ENCODE measurements at regions of chr15 and their contacts with region 1.

Region 1: GRCh38 chr15:65638681-65639089 is 16.9 kb downstream of the SLC24A1 start:
- DNase-seq: peak; percentile 56 to 73 (median 70)
- H3K4me3 ChIP-seq: no peak overlapping the region
- H3K4me3 Mint-ChIP-seq: peak overlapping the region in 4 of 8 donors; percentile 2 to 32 (median 6)
- H3K27ac ChIP-seq: no peak overlapping the region
- H3K27ac Mint-ChIP-seq: peak overlapping the region in 3 of 7 donors; percentile 0 to 38 (median 1)
- H3K4me1 ChIP-seq: peaks cover 8% of the 10 kb centered on the region
- H3K4me1 Mint-ChIP-seq: peaks cover 8 to 16% (median 9%) of the 10 kb centered on the region in 4 donors
- H3K27me3 ChIP-seq: no peaks in the 10 kb centered on the region
- H3K27me3 Mint-ChIP-seq: no peaks in the 10 kb centered on the region

Region 2: DNA sequence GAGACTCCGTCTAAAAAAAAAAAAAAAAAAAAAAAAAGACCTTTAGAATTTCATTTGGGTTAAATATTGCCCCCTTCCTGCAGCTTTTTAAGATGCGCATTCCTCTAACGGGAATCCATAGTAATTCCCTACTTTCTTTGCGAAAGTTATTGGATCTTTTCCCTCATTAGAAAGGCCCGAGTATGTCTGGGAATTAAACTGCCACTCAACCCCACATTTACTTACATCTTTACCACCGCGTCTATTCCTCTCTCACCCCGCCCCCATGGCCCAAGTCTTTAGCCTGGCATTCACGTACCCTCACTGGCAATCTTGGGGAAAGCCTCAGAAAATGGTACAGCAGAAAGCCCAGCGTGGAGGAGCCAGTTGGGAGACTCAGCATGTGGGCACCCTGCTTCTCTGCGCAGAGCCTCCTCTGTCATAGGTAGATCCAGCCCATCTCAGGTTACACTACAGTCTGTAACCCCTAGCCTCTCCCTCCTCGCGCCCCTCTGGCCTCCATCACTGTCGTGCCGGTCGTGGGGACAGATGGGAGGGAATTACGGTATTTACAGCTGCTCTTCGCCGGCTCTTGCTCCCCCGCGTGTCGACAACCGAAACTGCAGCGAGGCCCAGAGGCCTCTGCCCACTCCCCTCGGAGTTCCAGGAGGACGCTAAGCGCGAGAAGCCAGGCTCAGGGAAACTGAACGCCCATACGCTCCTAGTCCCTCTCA is 733.4 kb before region 1 on chr15:
- CTCF ChIA-PET with region 1: no interaction called
- POLR2A ChIA-PET with region 1: no interaction called
- intact Hi-C with region 1: no loop called
- DNase-seq: peak; percentile 72 to 76 (median 74)
- H3K4me3 ChIP-seq: peak overlapping the region in 1 of 2 donors; percentile 12
- H3K4me3 Mint-ChIP-seq: peak overlapping the region in 7 of 8 donors; percentile 51 to 79 (median 76)
- H3K27ac ChIP-seq: no peak overlapping the region
- H3K27ac Mint-ChIP-seq: peak overlapping the region; percentile 20 to 84 (median 52)
- H3K4me1 ChIP-seq: peaks cover 39% of the 10 kb centered on the region
- H3K4me1 Mint-ChIP-seq: peaks cover 30 to 47% (median 39%) of the 10 kb centered on the region in 4 donors
- H3K27me3 ChIP-seq: no peaks in the 10 kb centered on the region
- H3K27me3 Mint-ChIP-seq: peaks cover 0 to 3% of the 10 kb centered on the region in 2 donors

Region 3: DNA sequence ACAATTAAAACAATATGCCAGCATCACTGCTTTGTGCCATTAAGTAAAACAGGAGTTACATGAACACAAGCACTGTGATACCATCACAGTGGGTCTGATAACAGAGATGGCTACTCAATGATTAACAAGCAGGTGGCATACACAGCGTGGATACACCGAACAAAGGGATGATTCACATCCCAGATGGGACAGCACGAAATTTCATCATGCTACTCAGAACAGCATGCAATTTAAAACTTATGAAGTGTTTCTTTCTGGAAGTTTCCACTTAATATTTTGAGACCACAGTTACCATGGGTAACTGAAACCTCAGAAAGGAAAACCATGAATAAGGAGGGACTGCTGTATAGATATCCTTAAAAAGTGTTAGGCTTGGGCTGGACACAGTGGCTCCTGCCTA is 27.6 kb after region 1 on chr15:
- CTCF ChIA-PET with region 1: no interaction called
- POLR2A ChIA-PET with region 1: no interaction called
- intact Hi-C with region 1: no loop called
- DNase-seq: no peak
- H3K4me3 ChIP-seq: no peak overlapping the region
- H3K4me3 Mint-ChIP-seq: no peak overlapping the region
- H3K27ac ChIP-seq: no peak overlapping the region
- H3K27ac Mint-ChIP-seq: peak overlapping the region in 1 of 7 donors; percentile 57
- H3K4me1 ChIP-seq: no peaks in the 10 kb centered on the region
- H3K4me1 Mint-ChIP-seq: no peaks in the 10 kb centered on the region
- H3K27me3 ChIP-seq: no peaks in the 10 kb centered on the region
- H3K27me3 Mint-ChIP-seq: no peaks in the 10 kb centered on the region

Region 4: GRCh38 chr15:65832549-65833364 is 194.1 kb after region 1 on chr15:
- CTCF ChIA-PET with region 1: interaction called, 85 read pairs
- POLR2A ChIA-PET with region 1: interaction called, 5 read pairs
- intact Hi-C with region 1: loop called (anchors 1 kb)
- DNase-seq: peak; percentile 65 to 73 (median 69)
- H3K4me3 ChIP-seq: peak overlapping the region in 1 of 2 donors; percentile 7
- H3K4me3 Mint-ChIP-seq: peak overlapping the region; percentile 77 to 91 (median 81)
- H3K27ac ChIP-seq: peak overlapping the region; percentile 71
- H3K27ac Mint-ChIP-seq: peak overlapping the region; percentile 93 to 97 (median 96)
- H3K4me1 ChIP-seq: peaks cover 68% of the 10 kb centered on the region
- H3K4me1 Mint-ChIP-seq: peaks cover 47 to 72% (median 59%) of the 10 kb centered on the region in 4 donors
- H3K27me3 ChIP-seq: no peaks in the 10 kb centered on the region
- H3K27me3 Mint-ChIP-seq: no peaks in the 10 kb centered on the region

Region 5: DNA sequence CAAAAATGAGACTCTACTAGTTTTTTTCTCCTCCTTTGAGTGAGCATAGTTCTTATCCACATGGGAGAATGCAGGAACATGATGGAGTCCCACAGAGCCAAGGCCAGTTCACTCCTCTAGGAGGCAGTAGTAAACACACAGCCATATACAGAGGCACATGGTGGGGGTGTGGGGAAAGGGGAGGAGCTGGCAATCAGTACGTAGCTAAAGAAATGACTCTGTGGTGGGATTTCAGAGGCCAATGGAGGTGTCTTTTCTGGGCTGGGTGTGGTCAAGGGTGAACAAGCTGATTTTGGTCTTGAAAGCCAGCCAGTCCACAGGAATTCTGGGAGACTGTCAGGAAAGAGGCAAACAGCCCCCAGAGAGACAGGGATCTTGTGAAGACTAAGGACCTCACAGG is 224.0 kb after region 1 on chr15:
- CTCF ChIA-PET with region 1: interaction called, 69 read pairs
- POLR2A ChIA-PET with region 1: interaction called, 4 read pairs
- intact Hi-C with region 1: loop called (anchors 1 kb)
- DNase-seq: peak; percentile 43 to 76 (median 47)
- H3K4me3 ChIP-seq: no peak overlapping the region
- H3K4me3 Mint-ChIP-seq: peak overlapping the region in 1 of 8 donors; percentile 39
- H3K27ac ChIP-seq: no peak overlapping the region
- H3K27ac Mint-ChIP-seq: peak overlapping the region in 3 of 7 donors; percentile 15 to 35 (median 22)
- H3K4me1 ChIP-seq: no peaks in the 10 kb centered on the region
- H3K4me1 Mint-ChIP-seq: peaks cover 5 to 10% (median 8%) of the 10 kb centered on the region in 4 donors
- H3K27me3 ChIP-seq: no peaks in the 10 kb centered on the region
- H3K27me3 Mint-ChIP-seq: no peaks in the 10 kb centered on the region

Region 6: DNA sequence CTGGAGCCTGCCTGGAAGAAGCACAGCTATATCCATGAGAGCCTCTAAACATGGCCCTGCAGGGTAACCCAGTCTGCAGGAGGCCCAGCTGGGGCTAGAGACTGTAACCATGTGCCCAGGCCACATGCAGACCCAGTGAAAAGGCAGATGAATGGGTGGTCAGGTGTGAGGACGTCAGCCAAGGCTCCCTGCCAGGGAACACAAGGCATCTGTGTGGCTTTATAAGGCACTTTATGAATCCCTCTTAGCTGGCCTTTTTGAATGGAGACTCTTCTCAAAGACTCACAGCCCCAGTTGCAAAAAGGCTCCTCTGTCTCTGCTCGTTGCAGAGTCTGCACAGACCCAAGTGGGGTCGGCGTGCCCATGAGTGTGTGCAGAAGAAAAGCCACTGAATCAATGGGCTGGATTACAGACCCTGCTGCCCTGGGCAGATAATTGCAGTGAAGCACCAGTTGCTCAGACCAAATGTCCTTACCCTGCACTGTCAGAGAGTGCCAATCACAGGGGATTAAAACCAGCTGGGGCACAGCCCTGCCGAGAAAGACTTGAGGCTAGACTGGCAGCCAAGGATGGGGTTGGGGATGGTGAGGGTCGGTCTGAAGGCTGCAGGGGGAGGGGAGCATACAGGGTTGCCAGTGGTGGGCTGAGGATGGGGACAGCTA is 384.8 kb after region 1 on chr15:
- CTCF ChIA-PET with region 1: no interaction called
- POLR2A ChIA-PET with region 1: no interaction called
- intact Hi-C with region 1: no loop called
- DNase-seq: no peak
- H3K4me3 ChIP-seq: no peak overlapping the region
- H3K4me3 Mint-ChIP-seq: no peak overlapping the region
- H3K27ac ChIP-seq: no peak overlapping the region
- H3K27ac Mint-ChIP-seq: no peak overlapping the region
- H3K4me1 ChIP-seq: no peaks in the 10 kb centered on the region
- H3K4me1 Mint-ChIP-seq: no peaks in the 10 kb centered on the region
- H3K27me3 ChIP-seq: peaks cover 4% of the 10 kb centered on the region
- H3K27me3 Mint-ChIP-seq: peaks cover 16% of the 10 kb centered on the region in 2 donors

Region 7: GRCh38 chr15:66190746-66191145 is 552.1 kb after region 1 on chr15:
- CTCF ChIA-PET with region 1: no interaction called
- POLR2A ChIA-PET with region 1: no interaction called
- intact Hi-C with region 1: loop called (anchors 1 kb)
- DNase-seq: no peak
- H3K4me3 ChIP-seq: no peak overlapping the region
- H3K4me3 Mint-ChIP-seq: no peak overlapping the region
- H3K27ac ChIP-seq: no peak overlapping the region
- H3K27ac Mint-ChIP-seq: no peak overlapping the region
- H3K4me1 ChIP-seq: no peaks in the 10 kb centered on the region
- H3K4me1 Mint-ChIP-seq: no peaks in the 10 kb centered on the region
- H3K27me3 ChIP-seq: peaks cover 4% of the 10 kb centered on the region
- H3K27me3 Mint-ChIP-seq: peaks cover 7 to 13% of the 10 kb centered on the region in 2 donors